Mammary epithelial cell (primary cell): ENCODE measurements at regions of chr2 and their contacts with region 1.

Region 1: DNA sequence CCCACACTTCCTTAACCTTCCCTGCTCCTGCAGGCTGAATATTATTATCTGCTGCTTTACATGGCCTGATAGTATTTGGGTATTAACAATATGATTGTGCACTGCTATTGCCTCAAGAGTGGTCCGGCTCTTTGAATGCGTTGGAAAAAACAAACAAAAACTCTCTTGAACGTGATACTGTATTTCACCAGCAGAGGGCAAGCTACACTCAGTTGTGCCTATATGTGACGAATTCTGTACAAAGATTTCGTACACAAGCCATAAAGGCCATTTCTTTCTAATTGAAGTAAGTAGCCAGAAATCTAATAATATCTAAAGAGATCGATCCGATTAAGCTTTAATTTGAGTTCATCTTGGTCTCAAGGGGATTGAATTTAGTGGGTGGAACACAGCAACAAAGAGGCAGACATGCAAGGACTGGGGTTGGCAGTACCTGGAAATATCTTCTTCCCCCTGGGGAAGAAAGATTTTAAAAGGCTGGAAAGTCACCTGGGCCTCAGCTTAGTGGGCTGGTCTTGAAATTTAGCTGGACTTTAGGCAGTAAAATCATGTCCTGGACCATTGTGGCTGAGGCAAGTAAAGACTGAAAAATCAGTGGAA is 49.3 kb upstream of the RAB6D start:
- DNase-seq: peak; percentile 17
- H3K4me3 ChIP-seq: no peak overlapping the region
- H3K27ac ChIP-seq: no peak overlapping the region
- H3K4me1 ChIP-seq: no peaks in the 10 kb centered on the region
- H3K27me3 ChIP-seq: peaks cover 3% of the 10 kb centered on the region
- CTCF ChIP-seq: peak; percentile 64 to 76

Region 2: DNA sequence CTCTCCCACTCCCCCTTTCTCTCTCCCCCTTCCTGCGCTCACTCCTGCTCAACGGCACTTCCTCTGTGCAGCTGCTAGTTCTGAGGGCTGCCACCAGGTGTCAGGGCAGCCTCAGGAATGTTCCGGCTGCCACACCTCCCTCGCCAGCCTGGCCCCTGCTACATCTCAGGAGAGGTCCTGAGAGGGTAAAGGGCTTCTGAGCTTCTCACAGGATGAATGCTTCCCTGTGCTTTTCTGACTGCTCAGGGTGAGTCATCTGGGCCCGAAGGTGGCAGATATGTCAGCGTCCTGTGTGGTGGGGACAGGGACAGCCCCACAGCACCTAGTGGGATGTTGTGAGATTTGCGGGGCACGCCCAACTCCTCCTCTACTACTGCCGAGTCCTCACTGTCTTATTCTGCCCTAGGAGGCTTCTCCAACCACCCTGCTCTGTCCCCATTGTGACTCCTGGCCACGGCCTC is 259.1 kb before region 1 on chr2:
- CTCF ChIA-PET with region 1: no interaction called
- dilution Hi-C with region 1: no loop called
- in situ Hi-C with region 1: no loop called
- intact Hi-C with region 1: loop called (anchors 2 kb)
- DNase-seq: peak; percentile 46
- H3K4me3 ChIP-seq: no peak overlapping the region
- H3K27ac ChIP-seq: no peak overlapping the region
- H3K4me1 ChIP-seq: no peaks in the 10 kb centered on the region
- H3K27me3 ChIP-seq: no peaks in the 10 kb centered on the region
- CTCF ChIP-seq: peak; percentile 77 to 91

Region 3: GRCh38 chr2:131475831-131476230 is 62.6 kb after region 1 on chr2 and contains the start of gene TUBA3D:
- CTCF ChIA-PET with region 1: no interaction called
- dilution Hi-C with region 1: no loop called
- in situ Hi-C with region 1: no loop called
- intact Hi-C with region 1: no loop called
- DNase-seq: no peak
- H3K4me3 ChIP-seq: no peak within 1 kb of the TSS
- H3K27ac ChIP-seq: no peak within 1 kb of the TSS
- H3K4me1 ChIP-seq: no peaks in the 10 kb centered on the region
- H3K27me3 ChIP-seq: no peaks in the 10 kb centered on the region
- CTCF ChIP-seq: no peak
- total RNA-seq, gene TUBA3D: not detected

Region 4: GRCh38 chr2:131543371-131543891 is 130.2 kb after region 1 on chr2:
- CTCF ChIA-PET with region 1: no interaction called
- dilution Hi-C with region 1: no loop called
- in situ Hi-C with region 1: no loop called
- intact Hi-C with region 1: loop called (anchors 10 kb)
- DNase-seq: no peak
- H3K4me3 ChIP-seq: no peak overlapping the region
- H3K27ac ChIP-seq: no peak overlapping the region
- H3K4me1 ChIP-seq: no peaks in the 10 kb centered on the region
- H3K27me3 ChIP-seq: no peaks in the 10 kb centered on the region
- CTCF ChIP-seq: no peak